GM18951 (cell line): ENCODE measurements at regions of chr3 and their contacts with region 1.

Region 1: DNA sequence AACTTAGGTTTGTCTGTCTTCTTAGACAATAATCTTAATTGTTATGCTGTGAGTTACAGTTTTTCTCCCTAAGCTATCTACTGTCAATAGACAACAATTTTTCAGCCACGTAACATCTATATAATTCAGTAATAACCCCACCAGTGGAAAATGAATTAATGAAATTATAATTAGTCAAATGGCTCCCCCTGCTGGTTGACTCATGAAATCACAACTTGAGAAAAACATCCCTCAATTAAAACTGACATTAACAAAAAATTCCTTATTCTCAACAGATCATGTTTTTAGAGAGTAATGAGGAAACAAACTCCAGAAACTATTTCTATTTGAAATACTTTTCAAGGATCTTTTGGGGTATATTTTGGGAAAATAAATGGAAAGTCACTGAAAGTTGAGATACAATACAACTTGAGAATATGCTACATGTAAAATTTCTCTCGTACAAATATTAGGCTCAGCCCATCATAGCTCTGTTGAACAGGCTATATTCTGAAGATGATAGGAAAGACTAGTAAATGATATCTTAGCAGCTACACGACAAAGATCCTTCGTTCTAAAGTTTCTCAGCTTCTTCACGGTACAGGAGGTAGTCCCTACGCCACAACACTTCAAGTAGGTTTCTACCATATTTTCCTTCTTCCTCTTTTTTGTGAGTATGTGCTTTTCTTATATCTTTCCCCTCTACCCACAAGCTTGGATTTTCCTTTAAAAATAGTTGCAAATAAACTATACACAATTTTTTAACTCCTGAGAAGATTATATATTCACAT is 20.7 kb downstream of the PPP1R2 start:
- POLR2A ChIP-seq: no peak

Region 2: DNA sequence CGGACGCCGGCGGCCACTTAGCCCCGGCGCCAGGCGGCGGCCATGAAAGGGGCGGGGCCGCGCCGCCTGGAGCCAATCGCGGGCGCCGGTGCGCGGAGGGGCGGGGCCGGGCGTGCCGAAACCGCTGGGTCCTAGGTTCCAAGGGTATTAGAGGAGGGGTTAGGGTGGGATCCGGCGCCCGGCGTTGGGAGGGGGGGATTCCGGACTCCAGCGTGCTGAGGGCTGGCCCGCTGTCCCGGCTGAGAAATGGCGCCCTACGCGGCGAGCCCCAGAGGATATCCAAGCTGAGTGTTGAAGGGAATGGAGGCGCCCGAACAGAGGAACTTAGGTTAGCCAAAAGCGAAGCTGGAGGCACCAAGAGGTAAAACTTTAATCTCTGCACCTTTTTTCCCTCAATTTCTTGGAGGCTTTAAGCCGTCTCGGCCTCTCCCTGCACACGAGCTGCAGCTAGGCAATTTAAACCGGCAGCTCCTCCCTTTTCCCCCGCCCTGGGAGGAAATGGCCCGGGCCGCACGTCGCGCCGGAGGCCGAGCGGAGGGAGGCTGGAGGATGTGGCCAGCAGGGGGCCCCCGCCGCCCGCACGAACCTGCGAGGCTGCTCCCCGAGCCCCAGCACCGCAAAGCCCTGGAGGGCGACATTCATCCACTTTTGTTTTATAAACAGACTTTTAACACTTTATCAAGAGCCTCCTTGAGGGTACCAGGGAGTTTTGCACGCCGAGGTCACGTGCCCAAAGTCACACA is 251.2 kb before region 1 on chr3 and contains the start of gene XXYLT1:
- in situ Hi-C with region 1: loop called (anchors 5 kb)
- POLR2A ChIP-seq: peak; percentile 12

Region 3: DNA sequence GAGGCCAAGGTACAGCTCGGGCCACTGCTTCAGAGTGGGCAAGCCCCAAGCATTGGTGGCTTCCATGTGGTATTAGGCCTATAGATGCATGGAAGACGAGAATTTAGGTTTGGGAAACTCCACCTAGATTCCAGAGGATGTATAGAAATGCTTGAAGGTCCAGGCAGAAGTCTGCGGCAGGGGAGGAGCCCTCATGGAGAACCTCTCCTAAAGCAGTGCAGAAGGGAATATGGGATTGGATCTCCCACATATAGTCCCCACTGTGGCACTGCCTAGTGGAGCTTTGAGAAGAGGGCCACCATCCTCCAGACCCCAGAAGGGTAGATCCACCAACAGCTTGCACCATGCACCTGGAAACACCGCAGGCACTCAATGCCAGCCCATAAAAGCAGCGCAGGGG is 203.4 kb before region 1 on chr3:
- in situ Hi-C with region 1: no loop called
- POLR2A ChIP-seq: no peak